Activated CD4-positive, alpha-beta T cell treated with anti-CD3 and anti-CD28 coated beads, Interleukin-2, amount 10 ng/mL, durations not matched to agents 24 days and 14 days (primary cell): ENCODE measurements at regions of chr3 and their contacts with region 1.

Region 1: GRCh38 chr3:196568246-196569002 is at the starts of genes FBXO45 and WDR53:
- DNase-seq: peak; percentile 99
- H3K4me3 Mint-ChIP-seq: peak within 1 kb of the TSS; percentile 95
- H3K27ac Mint-ChIP-seq: peak within 1 kb of the TSS; percentile 97
- H3K4me1 Mint-ChIP-seq: peaks cover 37% of the 10 kb centered on the region
- H3K27me3 Mint-ChIP-seq: no peaks in the 10 kb centered on the region
- total RNA-seq, gene FBXO45: 25.5 and 25.9 TPM in 2 replicates
- total RNA-seq, gene WDR53: 18.4 and 24.5 TPM in 2 replicates

Region 2: GRCh38 chr3:196432137-196432879 is 136.1 kb before region 1 on chr3 and contains the start of gene UBXN7:
- intact Hi-C with region 1: loop called (anchors 5 kb)
- DNase-seq: peak; percentile 98
- H3K4me3 Mint-ChIP-seq: peak within 1 kb of the TSS; percentile 85
- H3K27ac Mint-ChIP-seq: peak within 1 kb of the TSS; percentile 97
- H3K4me1 Mint-ChIP-seq: peaks cover 20% of the 10 kb centered on the region
- H3K27me3 Mint-ChIP-seq: no peaks in the 10 kb centered on the region
- total RNA-seq, gene UBXN7: 65.5 and 70.8 TPM in 2 replicates

Region 3: GRCh38 chr3:196528639-196529233 is 39.7 kb before region 1 on chr3:
- intact Hi-C with region 1: loop called (anchors 5 kb)
- DNase-seq: peak; percentile 95
- H3K4me3 Mint-ChIP-seq: peak overlapping the region; percentile 75
- H3K27ac Mint-ChIP-seq: peak overlapping the region; percentile 82
- H3K4me1 Mint-ChIP-seq: peaks cover 12% of the 10 kb centered on the region
- H3K27me3 Mint-ChIP-seq: peaks cover 12% of the 10 kb centered on the region

Region 4: DNA sequence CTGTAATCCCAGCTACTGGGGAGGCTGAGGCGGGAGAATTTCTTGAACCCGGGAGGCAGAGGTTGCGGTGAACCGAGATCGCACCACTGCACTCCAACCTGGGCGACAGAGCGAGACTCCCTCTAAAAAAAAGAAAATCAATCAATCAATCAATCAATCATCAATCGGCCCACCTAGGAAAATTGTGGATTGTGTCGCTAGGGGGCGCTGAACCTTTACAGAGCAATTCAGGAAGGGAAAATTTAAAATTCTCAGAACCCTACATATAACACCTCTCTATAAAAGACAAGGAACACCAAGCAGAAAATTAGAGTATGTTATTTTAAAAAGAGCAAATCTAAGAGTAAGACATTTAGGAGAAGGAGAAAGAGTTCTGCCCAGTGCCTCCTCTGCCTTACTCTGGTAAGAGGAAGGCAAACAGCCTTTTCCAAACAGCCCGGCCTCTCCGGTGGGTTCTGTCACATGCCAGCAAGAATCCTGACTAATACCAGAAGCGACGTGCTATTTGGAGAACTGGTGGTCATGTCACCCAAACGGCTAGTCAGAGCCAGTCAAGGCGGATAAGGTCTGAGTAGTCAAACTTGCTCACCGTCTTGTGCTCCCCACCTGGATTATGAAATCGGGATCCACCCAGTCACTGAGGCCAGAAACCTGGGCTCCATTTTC is 31.0 kb before region 1 on chr3:
- intact Hi-C with region 1: loop called (anchors 2 kb)
- DNase-seq: peak; percentile 89
- H3K4me3 Mint-ChIP-seq: no peak overlapping the region
- H3K27ac Mint-ChIP-seq: no peak overlapping the region
- H3K4me1 Mint-ChIP-seq: peaks cover 3% of the 10 kb centered on the region
- H3K27me3 Mint-ChIP-seq: peaks cover 8% of the 10 kb centered on the region

Region 5: DNA sequence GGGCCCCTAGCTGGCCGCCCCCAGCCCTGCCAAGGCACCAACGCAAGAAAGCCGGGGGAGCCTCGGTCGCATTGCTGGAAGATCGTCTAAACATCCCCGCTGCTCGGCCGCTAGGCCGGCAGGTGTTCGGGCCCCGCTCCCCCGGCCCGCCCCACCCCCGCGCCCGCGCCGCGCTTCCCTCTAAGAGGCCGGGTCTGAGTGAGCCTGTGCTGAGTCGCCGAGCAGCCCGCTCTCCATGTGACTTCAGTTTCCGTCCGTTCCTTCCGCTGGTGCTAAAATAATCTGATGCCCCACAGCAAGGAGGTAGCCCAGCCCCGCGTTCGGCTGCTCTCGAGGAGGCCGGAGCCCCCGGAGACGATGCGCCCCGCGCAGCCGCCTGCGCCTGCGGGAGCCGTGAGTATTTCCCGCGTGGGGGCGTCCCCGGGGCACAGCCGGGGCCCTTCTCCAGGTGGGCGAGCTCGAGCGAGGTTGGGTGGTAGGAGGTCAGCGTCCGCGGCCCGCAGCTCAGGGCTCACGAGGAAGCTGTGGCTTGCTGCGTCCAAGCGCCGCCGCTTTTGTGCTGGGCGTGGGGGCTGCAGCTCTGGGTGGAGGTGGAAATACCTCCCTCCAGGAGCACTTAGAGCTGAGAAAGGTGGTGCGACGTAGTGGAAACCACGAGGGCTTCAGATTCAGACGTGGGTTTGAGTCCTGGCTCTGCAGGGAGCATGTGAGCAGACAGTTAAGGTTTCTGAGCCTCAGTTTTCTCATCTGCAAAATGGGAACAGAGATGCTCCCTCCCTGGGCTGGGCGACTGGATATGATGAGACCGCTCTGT is 71.3 kb after region 1 on chr3 and contains the start of gene NRROS:
- intact Hi-C with region 1: loop called (anchors 5 kb)
- DNase-seq: peak; percentile 89
- H3K4me3 Mint-ChIP-seq: peak within 1 kb of the TSS; percentile 86
- H3K27ac Mint-ChIP-seq: peak within 1 kb of the TSS; percentile 94
- H3K4me1 Mint-ChIP-seq: peaks cover 53% of the 10 kb centered on the region
- H3K27me3 Mint-ChIP-seq: no peaks in the 10 kb centered on the region
- total RNA-seq, gene NRROS: 38.2 and 39.0 TPM in 2 replicates

Region 6: GRCh38 chr3:196739671-196740480 is 171.5 kb after region 1 on chr3 and contains the start of gene PAK2:
- intact Hi-C with region 1: loop called (anchors 1 kb)
- DNase-seq: peak; percentile 97
- H3K4me3 Mint-ChIP-seq: peak within 1 kb of the TSS; percentile 96
- H3K27ac Mint-ChIP-seq: peak within 1 kb of the TSS; percentile 98
- H3K4me1 Mint-ChIP-seq: peaks cover 22% of the 10 kb centered on the region
- H3K27me3 Mint-ChIP-seq: no peaks in the 10 kb centered on the region
- total RNA-seq, gene PAK2: 81.1 and 92.5 TPM in 2 replicates

Region 7: GRCh38 chr3:196942226-196942914 is 373.9 kb after region 1 on chr3 and contains the start of gene NCBP2:
- intact Hi-C with region 1: loop called (anchors 1 kb)
- DNase-seq: peak; percentile 100
- H3K4me3 Mint-ChIP-seq: peak within 1 kb of the TSS; percentile 89
- H3K27ac Mint-ChIP-seq: peak within 1 kb of the TSS; percentile 95
- H3K4me1 Mint-ChIP-seq: peaks cover 41% of the 10 kb centered on the region
- H3K27me3 Mint-ChIP-seq: peaks cover 2% of the 10 kb centered on the region
- total RNA-seq, gene NCBP2: 101 and 105 TPM in 2 replicates